ENCODE measurements at regions of chr17 and their contacts with region 1.

Region 1: DNA sequence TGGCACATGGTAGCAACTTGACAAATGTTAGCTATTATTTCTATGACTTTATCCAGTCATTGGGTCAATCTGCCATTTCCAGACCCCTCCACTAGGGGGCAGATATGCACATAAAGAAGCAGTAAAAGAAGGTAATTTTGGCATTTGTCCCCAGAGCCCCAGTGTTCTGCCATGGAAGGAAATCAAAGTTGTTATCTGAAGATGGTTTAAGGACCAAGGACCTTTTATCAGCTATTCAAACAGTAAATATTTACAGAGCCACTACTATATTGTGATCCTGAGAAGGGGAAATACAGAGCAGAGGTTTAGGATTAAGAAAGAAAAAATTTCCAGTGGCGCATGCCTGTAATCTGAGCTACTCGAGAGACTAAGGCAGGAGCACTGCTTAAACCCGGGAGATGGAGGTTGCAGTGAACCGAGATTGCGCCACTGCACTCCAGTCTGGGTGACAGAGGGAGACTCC is 20.0 kb downstream of the TRAF4 start:
- DNase-seq: peak in 7 of 10 donors; percentile 69 to 94 (median 72)
- H3K4me3 ChIP-seq: peak overlapping the region in 1 of 59 donors; percentile 14
- H3K27ac ChIP-seq: peak overlapping the region in 47 of 59 donors; percentile 1 to 89 (median 65)
- H3K27me3 ChIP-seq: no peaks in the 10 kb centered on the region
- CTCF ChIP-seq: peak; percentile 88 to 99 (median 94)

Region 2: GRCh38 chr17:28812091-28812747 is 48.4 kb after region 1 on chr17:
- intact Hi-C with region 1: loop called (anchors 5 kb)
- DNase-seq: peak; percentile 95 to 99 (median 98)
- H3K4me3 ChIP-seq: peak overlapping the region; percentile 70 to 98 (median 90)
- H3K27ac ChIP-seq: peak overlapping the region; percentile 68 to 99 (median 93)
- H3K27me3 ChIP-seq: no peaks in the 10 kb centered on the region
- CTCF ChIP-seq: peak in 8 of 56 donors; percentile 4 to 45 (median 19)

Region 3: DNA sequence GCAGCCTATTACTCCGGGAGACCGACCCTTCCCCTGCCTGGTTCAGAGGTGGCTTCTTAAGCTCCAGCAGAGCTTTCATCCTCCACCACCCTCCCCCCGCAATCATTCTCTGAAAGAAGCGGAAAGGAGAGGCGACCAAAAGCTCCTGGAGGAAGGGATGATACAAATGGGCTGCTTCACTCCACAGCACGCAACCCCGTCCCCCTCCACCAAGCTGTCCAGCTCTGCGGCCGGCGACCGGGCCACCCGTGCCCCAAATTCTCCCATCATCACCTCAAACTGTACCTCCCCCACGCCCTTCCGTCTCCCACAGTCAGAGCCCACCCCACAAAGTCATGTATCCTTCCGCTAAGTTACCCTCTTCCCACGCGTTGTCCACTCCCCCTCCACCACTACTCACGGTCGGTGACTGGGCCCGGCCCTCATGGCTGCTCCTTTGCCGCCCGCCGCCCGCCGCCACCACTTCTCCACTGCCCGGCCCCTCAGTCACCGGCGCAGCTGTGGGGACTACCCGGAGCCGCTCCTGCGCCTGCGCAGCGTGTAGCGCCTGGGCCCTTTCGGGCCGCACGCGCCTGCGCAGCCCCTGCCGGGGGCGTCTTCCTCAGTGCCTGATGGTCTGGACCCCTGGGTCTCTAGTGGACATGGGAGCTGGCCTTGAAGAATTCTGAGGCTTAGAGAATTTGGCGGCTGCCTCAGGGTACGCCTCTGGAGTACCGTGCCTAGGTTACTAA is 78.6 kb after region 1 on chr17 and contains the start of gene FAM222B:
- intact Hi-C with region 1: loop called (anchors 5 kb)
- DNase-seq: peak; percentile 63 to 92 (median 76)
- H3K4me3 ChIP-seq: peak within 1 kb of the TSS; percentile 42 to 96 (median 84)
- H3K27ac ChIP-seq: peak within 1 kb of the TSS in 58 of 59 donors; percentile 12 to 95 (median 83)
- H3K27me3 ChIP-seq: no peaks in the 10 kb centered on the region
- CTCF ChIP-seq: peak in 40 of 56 donors; percentile 14 to 60 (median 33)
- total RNA-seq, gene FAM222B: 17.4 to 36.2 (median 25.3) TPM

Region 4: GRCh38 chr17:28854457-28855350 is 90.9 kb after region 1 on chr17 and contains the start of gene ERAL1:
- intact Hi-C with region 1: loop called in 1 of 2 experiments (anchors 5 kb)
- DNase-seq: peak; percentile 74 to 93 (median 92)
- H3K4me3 ChIP-seq: peak within 1 kb of the TSS; percentile 58 to 93 (median 81)
- H3K27ac ChIP-seq: peak within 1 kb of the TSS; percentile 56 to 97 (median 86)
- H3K27me3 ChIP-seq: no peaks in the 10 kb centered on the region
- CTCF ChIP-seq: peak in 41 of 56 donors; percentile 8 to 64 (median 41)
- total RNA-seq, gene ERAL1: 32.0 to 63.5 (median 45.6) TPM

Region 5: DNA sequence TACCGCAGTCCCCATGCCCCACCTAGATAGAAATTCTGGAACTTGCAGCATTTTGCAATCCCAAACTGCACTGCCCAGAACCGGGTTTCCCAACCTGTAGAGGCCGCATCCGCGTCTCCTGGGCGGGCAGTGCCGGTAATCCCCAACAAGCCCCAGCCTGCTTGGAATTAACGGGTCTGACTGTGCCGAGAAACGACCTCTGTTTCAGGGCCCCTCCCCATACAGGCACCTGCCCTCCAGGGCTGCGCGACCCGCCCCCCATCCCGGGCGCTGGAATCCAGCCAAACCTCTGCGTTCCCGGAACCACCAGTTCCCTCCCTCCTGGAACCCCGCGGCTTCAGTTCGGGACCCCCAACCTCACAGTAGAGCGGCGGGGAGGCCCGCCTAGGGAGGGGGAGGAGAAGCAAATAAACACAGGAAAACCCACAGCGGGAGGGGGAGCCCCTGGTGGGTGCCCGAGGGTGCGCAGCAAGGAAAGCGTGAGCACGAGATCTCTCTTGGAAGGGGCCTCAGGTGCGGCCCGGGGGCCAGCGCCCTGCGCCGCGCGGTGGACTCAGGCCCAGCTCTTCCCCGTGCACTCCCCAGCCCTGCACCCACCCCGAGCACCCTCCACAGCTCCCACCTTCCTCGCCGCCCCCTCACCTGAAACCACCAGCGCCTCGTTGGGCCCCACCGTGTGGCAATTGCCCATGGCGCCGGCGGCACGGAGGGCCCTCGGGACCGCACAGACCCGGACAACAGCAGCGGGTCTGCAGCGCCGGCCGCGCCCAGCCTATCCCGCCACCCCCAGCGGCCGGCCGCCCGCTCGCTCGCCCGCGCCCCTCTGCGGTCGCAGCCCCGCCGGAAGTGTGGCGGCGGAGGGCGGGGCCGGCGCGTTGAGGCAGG is 133.3 kb after region 1 on chr17 and contains the start of gene FLOT2:
- intact Hi-C with region 1: loop called (anchors 5 kb)
- DNase-seq: peak in 8 of 10 donors; percentile 31 to 75 (median 55)
- H3K4me3 ChIP-seq: peak within 1 kb of the TSS; percentile 41 to 97 (median 88)
- H3K27ac ChIP-seq: peak within 1 kb of the TSS; percentile 59 to 99 (median 95)
- H3K27me3 ChIP-seq: no peaks in the 10 kb centered on the region
- CTCF ChIP-seq: peak in 34 of 56 donors; percentile 6 to 56 (median 28)
- total RNA-seq, gene FLOT2: 50.7 to 182 (median 108) TPM

Region 6: DNA sequence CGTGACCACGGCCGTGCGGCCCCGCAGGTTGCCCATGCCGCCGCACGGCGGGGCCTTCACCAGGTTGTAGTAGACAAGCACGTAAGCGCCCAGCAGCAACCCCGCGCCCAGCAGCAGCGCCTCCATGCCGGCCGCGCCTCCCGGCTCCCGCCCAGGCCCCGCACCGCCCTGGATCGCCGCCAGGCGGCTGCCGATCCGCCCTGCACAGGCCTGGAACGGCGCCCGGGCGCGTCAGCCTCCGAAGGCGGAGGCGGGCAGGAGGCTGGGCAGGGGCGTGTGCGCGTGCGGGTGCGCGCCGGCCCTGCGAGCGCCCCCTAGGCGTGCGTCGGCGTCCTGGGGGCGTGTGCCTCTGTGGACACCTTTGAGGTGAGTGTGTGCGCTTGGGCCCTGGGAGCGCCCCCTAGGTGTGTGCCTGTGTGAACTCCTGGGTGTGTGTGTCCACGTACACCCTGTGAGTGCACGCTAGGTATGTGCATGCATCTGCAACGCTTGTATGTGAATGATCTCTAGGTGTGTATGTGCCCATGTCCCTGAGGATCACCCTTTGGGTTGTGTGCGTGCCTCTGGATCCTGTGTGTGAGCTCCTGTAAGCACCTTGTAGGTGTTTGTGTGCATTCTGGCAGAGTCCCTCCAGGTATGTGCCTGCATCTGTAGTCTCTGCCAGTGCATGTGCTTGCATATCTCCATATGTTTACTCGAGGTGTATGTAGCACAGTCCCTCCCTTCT is 139.1 kb after region 1 on chr17 and contains the start of gene DHRS13:
- intact Hi-C with region 1: loop called (anchors 5 kb)
- DNase-seq: peak; percentile 58 to 89 (median 78)
- H3K4me3 ChIP-seq: peak within 1 kb of the TSS; percentile 59 to 88 (median 77)
- H3K27ac ChIP-seq: peak within 1 kb of the TSS in 58 of 59 donors; percentile 5 to 92 (median 78)
- H3K27me3 ChIP-seq: no peaks in the 10 kb centered on the region
- CTCF ChIP-seq: peak; percentile 42 to 98 (median 85)
- total RNA-seq, gene DHRS13: 5.9 to 22.5 (median 10.1) TPM

Measured in dorsolateral prefrontal cortex (tissue), 120 donors.